ENCODE measurements at regions of chr20 and their contacts with region 1.

Region 1: GRCh38 chr20:4064144-4064909 is 49.0 kb upstream of the RNF24 start:
- DNase-seq: peak; percentile 96
- H3K4me3 ChIP-seq: no peak overlapping the region
- H3K27ac ChIP-seq: peak overlapping the region; percentile 76 to 79 (median 78)
- H3K4me1 ChIP-seq: peaks cover 38 to 48% (median 41%) of the 10 kb centered on the region in 4 donors
- H3K27me3 ChIP-seq: no peaks in the 10 kb centered on the region
- CTCF ChIP-seq: no peak
- EP300 ChIP-seq: no peak
- POLR2A ChIP-seq: no peak

Region 2: GRCh38 chr20:4022386-4023286 is 41.7 kb before region 1 on chr20:
- intact Hi-C with region 1: loop called (anchors 5 kb)
- DNase-seq: peak; percentile 83
- H3K4me3 ChIP-seq: no peak overlapping the region
- H3K27ac ChIP-seq: no peak overlapping the region
- H3K4me1 ChIP-seq: peaks cover 0 to 20% (median 10%) of the 10 kb centered on the region in 4 donors
- H3K27me3 ChIP-seq: no peaks in the 10 kb centered on the region
- CTCF ChIP-seq: no peak
- EP300 ChIP-seq: no peak
- POLR2A ChIP-seq: no peak

Measured in esophagus muscularis mucosa (tissue), 4 donors.